Natural killer cell (primary cell): ENCODE measurements at regions of chr3 and their contacts with region 1.

Region 1: GRCh38 chr3:182967218-182968204 is 12.8 kb downstream of the DCUN1D1 start:
- DNase-seq: peak in 1 of 2 donors; percentile 41
- ATAC-seq: peak; percentile 62 to 72 (median 70)
- H3K4me3 ChIP-seq: no peak overlapping the region
- H3K4me3 Mint-ChIP-seq: peak overlapping the region; percentile 5
- H3K27ac ChIP-seq: no peak overlapping the region
- H3K27ac Mint-ChIP-seq: peak overlapping the region; percentile 69 to 71
- H3K4me1 ChIP-seq: peaks cover 19% of the 10 kb centered on the region
- H3K4me1 Mint-ChIP-seq: peaks cover 44 to 50% of the 10 kb centered on the region in 2 donors
- H3K27me3 ChIP-seq: no peaks in the 10 kb centered on the region
- H3K27me3 Mint-ChIP-seq: no peaks in the 10 kb centered on the region
- CTCF ChIP-seq: no peak

Region 2: DNA sequence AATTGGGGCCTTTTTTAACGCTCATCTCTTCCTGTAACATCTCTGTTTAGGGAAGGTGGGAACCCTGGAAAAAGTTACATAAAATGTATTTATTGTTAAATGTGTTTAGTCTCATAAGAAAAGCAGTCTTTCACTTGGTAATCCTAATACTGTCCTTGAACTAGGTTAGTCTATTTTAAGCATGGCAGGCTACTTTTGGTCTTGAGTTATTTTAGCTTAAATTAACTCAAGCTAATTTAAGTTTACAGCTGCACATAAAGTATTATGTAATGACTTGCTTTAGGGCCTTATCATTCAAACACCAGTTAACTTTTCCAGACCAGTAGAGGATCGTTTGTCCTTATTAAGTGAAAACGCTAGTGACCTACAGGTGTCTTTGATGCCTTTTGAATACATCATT is 50.4 kb before region 1 on chr3:
- intact Hi-C with region 1: loop called (anchors 5 kb)
- DNase-seq: no peak
- ATAC-seq: no peak
- H3K4me3 ChIP-seq: no peak overlapping the region
- H3K4me3 Mint-ChIP-seq: no peak overlapping the region
- H3K27ac ChIP-seq: no peak overlapping the region
- H3K27ac Mint-ChIP-seq: no peak overlapping the region
- H3K4me1 ChIP-seq: peaks cover 6% of the 10 kb centered on the region
- H3K4me1 Mint-ChIP-seq: peaks cover 26 to 30% of the 10 kb centered on the region in 2 donors
- H3K27me3 ChIP-seq: no peaks in the 10 kb centered on the region
- H3K27me3 Mint-ChIP-seq: no peaks in the 10 kb centered on the region
- CTCF ChIP-seq: no peak